Activated T-helper 2 cell treated with anti-CD3 and anti-CD28 coated beads, Interferon-gamma antibody, Interleukin-2, Interleukin-4, amounts not matched to agents 10 μg/mL and 5 μg/mL and 100 μg/mL, durations not matched to agents 14 hours and 24 hours and 36 hours (primary cell): ENCODE measurements at regions of chr1 and their contacts with region 1.

Region 1: DNA sequence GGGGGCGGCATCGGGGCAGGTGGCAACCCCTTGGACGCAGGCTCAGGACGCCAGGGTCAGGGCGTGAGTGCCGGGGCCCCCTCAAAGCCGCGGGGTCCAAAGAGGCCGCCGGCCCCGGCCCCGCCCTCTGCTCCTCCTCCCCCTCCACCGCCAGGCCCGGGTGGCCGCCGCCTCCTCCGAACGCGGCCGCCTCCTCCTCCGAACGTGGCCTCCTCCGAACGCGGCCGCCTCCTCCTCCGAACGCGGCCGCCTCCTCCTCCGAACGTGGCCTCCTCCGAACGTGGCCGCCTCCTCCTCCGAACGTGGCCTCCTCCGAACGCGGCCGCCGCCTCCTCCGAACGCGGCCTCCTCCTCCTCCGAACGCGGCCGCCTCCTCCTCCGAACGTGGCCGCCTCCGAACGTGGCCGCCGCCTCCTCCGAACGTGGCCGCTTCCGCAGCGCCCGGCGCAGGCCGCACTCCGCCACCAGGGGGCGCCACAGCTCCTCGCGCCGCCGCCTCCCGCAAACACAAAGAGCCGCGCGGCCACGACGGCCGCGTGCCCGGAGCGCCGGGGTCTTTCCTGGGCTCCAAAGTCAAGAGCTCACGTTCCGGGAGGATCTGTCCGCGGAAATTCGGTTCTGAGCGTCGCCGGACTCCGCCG is 19.3 kb upstream of the SAMD11 start:
- DNase-seq: peak; percentile 83
- H3K4me3 Mint-ChIP-seq: peak overlapping the region; percentile 21
- H3K27ac Mint-ChIP-seq: no peak overlapping the region
- H3K4me1 Mint-ChIP-seq: peaks cover 5% of the 10 kb centered on the region
- H3K27me3 Mint-ChIP-seq: peaks cover 60% of the 10 kb centered on the region

Region 2: GRCh38 chr1:941588-942383 is 37.4 kb after region 1 on chr1:
- intact Hi-C with region 1: loop called (anchors 2 kb)
- DNase-seq: no peak
- H3K4me3 Mint-ChIP-seq: no peak overlapping the region
- H3K27ac Mint-ChIP-seq: no peak overlapping the region
- H3K4me1 Mint-ChIP-seq: peaks cover 3% of the 10 kb centered on the region
- H3K27me3 Mint-ChIP-seq: peaks cover 28% of the 10 kb centered on the region

Region 3: GRCh38 chr1:975896-976683 is 71.7 kb after region 1 on chr1:
- intact Hi-C with region 1: loop called (anchors 1 kb)
- DNase-seq: peak; percentile 57
- H3K4me3 Mint-ChIP-seq: no peak overlapping the region
- H3K27ac Mint-ChIP-seq: no peak overlapping the region
- H3K4me1 Mint-ChIP-seq: peaks cover 2% of the 10 kb centered on the region
- H3K27me3 Mint-ChIP-seq: peaks cover 10% of the 10 kb centered on the region